ENCODE measurements at regions of chr7 and their contacts with region 1.

Region 1: DNA sequence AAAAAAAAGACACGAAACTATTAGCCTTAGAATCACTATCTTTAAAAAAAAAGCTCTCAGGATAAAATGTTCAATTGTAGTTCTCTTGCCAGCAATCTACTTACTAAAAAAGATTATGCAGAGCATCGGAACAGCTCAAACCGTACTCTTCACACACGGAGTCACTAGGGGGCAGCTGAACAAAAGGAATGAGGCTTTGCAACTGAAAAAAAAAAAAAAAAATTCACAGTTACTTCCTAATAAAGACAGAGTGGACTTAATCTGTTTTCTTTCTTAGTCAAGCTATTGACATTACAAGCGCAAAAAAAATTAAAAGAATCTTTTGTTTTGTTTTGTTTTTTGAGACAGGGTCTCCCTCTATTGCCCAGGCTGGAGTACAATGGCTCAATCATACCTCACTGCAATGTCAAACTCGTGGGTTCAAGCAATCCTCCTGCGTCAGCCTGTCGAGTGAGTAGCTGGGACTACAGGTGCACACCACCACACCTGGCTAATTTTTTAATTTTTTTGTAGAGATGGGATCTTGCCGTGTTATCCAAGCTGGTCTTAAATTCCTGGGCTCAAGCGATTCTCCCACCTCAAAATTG is 11.5 kb downstream of the PMS2 start:
- DNase-seq: no peak
- H3K4me3 ChIP-seq: no peak overlapping the region
- H3K27me3 ChIP-seq: no peaks in the 10 kb centered on the region
- CTCF ChIP-seq: peak; percentile 69

Region 2: GRCh38 chr7:6008668-6009611 is 11.6 kb after region 1 on chr7 and contains the starts of genes AIMP2 and PMS2:
- CTCF ChIA-PET with region 1: interaction called, 10 read pairs
- POLR2A ChIA-PET with region 1: interaction called, 24 read pairs
- DNase-seq: peak; percentile 92
- H3K4me3 ChIP-seq: peak within 1 kb of the TSS; percentile 84
- H3K27me3 ChIP-seq: no peaks in the 10 kb centered on the region
- CTCF ChIP-seq: peak; percentile 26; the same call in 1 of the 2 replicates
- polyA plus RNA-seq, gene AIMP2: 74.9 and 75.0 TPM in 2 replicates
- polyA plus RNA-seq, gene PMS2: 6.4 and 9.7 TPM in 2 replicates

Region 3: DNA sequence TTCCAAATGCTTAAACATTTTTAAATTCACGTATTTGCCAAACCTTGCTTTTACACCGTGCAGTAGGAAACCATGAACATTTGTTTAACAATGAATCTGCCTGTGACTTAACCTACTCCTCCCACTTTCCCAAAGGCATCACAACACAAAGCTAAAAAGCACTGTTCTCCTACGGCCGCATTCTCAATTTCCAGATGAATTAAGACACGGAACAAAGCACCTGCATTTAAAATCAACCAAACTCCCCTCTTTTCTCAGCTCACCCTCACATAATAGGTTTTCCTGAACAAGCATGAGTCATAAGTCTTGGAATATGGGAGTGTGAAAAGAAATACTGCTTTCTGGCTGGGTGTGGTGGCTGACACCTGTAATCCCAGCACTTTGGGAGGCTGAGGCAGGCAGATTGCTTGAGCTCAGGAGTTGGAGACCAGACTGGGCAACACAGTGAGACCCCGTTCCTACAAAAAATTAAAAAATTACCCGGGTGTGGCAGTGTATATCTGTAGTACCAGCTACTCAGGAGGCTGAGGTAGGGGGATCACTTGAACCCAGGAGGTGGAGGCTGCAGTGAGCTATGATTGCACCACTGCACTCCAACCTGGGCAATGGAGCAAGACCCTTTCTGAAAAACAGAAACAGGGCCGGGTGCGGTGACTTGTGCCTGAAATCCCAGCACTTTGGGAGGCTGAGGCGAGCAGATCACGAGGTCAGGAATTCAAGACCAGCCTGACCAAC is 326.8 kb after region 1 on chr7:
- CTCF ChIA-PET with region 1: interaction called, 16 read pairs
- POLR2A ChIA-PET with region 1: no interaction called
- DNase-seq: no peak
- H3K4me3 ChIP-seq: no peak overlapping the region
- H3K27me3 ChIP-seq: no peaks in the 10 kb centered on the region
- CTCF ChIP-seq: no peak

Measured in BJ (cell line).